Naive thymus-derived CD4-positive, alpha-beta T cell (primary cell): ENCODE measurements at regions of chr13 and their contacts with region 1.

Region 1: DNA sequence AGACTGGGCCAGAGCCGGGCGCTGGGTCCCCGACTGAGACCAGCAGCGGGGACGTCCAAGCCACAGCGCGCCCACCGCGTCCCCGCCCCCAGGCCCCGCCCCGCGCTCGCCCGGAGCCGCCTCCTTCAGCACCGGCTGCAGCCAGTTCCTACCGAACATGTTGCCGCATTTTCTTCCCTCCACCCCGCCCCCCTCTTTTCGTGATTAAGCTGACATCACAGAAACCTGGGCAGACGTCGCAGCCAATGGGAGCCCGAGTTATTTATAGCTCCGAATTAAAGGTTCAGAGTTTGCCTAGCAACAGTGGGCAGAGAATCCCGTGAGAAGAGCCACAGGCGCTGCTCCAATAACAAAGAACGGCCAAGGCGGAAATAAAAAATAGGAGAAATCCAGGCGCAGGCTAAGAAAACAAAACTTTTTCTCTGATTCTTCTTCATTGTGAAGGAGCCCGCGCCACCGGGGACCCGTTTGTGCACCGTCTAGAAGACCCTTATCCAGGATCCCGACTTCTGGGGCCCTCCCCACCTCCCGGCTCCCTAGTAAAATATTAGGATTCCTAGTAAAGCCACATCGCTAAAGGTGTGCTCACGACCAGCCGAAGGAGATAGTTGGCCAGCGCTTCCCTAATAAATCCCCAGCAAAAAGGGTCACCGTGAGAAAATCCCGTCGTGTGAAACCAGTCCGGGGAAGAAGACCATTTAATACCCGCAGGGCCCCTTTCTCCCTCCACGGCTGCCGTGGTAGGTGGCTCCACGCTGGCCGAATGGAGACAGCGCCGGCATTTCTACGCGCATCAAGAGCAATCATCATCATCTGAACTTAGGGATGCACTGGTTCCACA is 61.7 kb downstream of the SERP2 start:
- DNase-seq: peak; percentile 58 to 94 (median 78)
- ATAC-seq: peak; percentile 91
- H3K4me3 ChIP-seq: peak overlapping the region; percentile 65
- H3K4me3 Mint-ChIP-seq: peak overlapping the region; percentile 85 to 94 (median 90)
- H3K27ac ChIP-seq: peak overlapping the region; percentile 75
- H3K27ac Mint-ChIP-seq: peak overlapping the region; percentile 21 to 93 (median 83)
- H3K4me1 ChIP-seq: peaks cover 13 to 14% of the 10 kb centered on the region in 2 donors
- H3K4me1 Mint-ChIP-seq: peaks cover 14 to 34% (median 27%) of the 10 kb centered on the region in 7 donors
- H3K27me3 ChIP-seq: peaks cover 0 to 3% of the 10 kb centered on the region in 2 donors
- H3K27me3 Mint-ChIP-seq: peaks cover 6 to 73% (median 9%) of the 10 kb centered on the region in 5 donors

Region 2: DNA sequence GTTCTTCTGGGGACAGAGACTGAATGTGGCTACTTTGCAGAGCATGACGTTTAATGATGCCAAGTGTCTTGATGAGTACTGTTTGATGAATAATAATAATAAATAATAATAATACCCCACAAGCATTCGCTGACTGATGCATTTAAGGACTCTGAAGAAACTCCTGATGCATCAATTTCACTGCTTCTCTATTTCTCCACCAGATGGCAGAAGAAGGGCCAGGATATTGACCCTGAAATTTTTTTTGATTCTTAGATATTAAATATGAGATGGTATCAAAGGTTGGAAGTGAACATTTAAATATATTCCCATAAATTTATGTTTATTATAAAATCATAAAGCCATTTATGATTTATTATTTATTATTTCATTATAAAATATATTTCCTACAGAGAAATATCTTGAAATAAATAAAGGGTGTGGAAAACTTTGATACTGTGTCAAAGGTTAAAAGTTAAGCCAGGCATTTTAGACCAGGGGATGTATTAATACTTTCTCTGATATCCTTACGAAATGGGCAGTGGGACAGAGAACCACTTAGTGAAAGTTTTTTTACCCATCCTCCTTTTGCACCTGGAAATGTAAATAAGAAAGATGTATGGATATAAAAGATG is 384.8 kb before region 1 on chr13:
- CTCF ChIA-PET with region 1: interaction called, 14 read pairs
- POLR2A ChIA-PET with region 1: no interaction called
- intact Hi-C with region 1: loop called (anchors 1 kb)
- DNase-seq: peak in 5 of 9 donors; percentile 25 to 50 (median 34)
- ATAC-seq: no peak
- H3K4me3 ChIP-seq: no peak overlapping the region
- H3K4me3 Mint-ChIP-seq: no peak overlapping the region
- H3K27ac ChIP-seq: no peak overlapping the region
- H3K27ac Mint-ChIP-seq: no peak overlapping the region
- H3K4me1 ChIP-seq: no peaks in the 10 kb centered on the region
- H3K4me1 Mint-ChIP-seq: peaks cover 0 to 4% (median 2%) of the 10 kb centered on the region in 7 donors
- H3K27me3 ChIP-seq: no peaks in the 10 kb centered on the region
- H3K27me3 Mint-ChIP-seq: peaks cover 32 to 53% (median 44%) of the 10 kb centered on the region in 5 donors

Region 3: DNA sequence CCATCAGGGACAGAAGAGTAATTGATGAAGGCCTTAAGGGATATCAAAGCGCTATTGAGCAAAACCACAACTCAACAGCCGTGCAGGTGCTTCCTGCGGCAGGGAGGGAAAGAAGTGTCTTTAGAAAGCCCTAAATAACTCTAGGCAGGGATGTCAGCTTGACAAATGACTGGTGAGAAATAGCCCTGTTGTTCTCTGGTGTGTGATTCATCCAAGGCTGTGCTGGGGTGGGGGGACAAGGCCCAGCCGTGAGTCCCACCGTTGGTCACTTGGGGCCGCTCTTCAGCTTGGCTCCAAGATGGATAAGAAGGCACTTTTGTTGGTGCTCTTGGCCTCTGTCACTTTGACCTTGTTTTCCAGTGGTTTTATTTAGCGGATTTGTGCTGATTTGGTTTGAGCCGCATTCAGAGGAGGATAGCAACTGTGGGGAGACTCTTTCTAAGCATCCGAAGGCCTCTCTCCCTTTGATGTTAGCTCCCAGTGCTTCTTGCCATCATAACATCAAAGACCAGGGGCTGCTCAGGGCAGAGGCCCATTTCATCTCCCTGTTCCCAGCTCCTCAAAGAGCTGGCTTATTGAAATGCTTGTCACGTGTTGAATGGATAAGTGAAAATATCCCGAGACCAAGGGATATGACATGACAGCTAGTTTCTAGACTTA is 192.0 kb before region 1 on chr13:
- CTCF ChIA-PET with region 1: no interaction called
- POLR2A ChIA-PET with region 1: no interaction called
- intact Hi-C with region 1: loop called (anchors 1 kb)
- DNase-seq: peak in 2 of 9 donors; percentile 9 to 27
- ATAC-seq: peak; percentile 80
- H3K4me3 ChIP-seq: no peak overlapping the region
- H3K4me3 Mint-ChIP-seq: peak overlapping the region in 1 of 10 donors; percentile 2
- H3K27ac ChIP-seq: no peak overlapping the region
- H3K27ac Mint-ChIP-seq: peak overlapping the region in 4 of 9 donors; percentile 3 to 37 (median 20)
- H3K4me1 ChIP-seq: no peaks in the 10 kb centered on the region
- H3K4me1 Mint-ChIP-seq: peaks cover 6 to 12% (median 11%) of the 10 kb centered on the region in 7 donors
- H3K27me3 ChIP-seq: no peaks in the 10 kb centered on the region
- H3K27me3 Mint-ChIP-seq: peaks cover 0 to 6% (median 0%) of the 10 kb centered on the region in 5 donors

Region 4: GRCh38 chr13:44470638-44471562 is 35.5 kb after region 1 on chr13:
- CTCF ChIA-PET with region 1: interaction called, 4 read pairs
- POLR2A ChIA-PET with region 1: no interaction called
- intact Hi-C with region 1: loop called in 1 of 2 experiments (anchors 1 kb)
- DNase-seq: peak in 5 of 9 donors; percentile 10 to 29 (median 21)
- ATAC-seq: no peak
- H3K4me3 ChIP-seq: no peak overlapping the region
- H3K4me3 Mint-ChIP-seq: no peak overlapping the region
- H3K27ac ChIP-seq: no peak overlapping the region
- H3K27ac Mint-ChIP-seq: no peak overlapping the region
- H3K4me1 ChIP-seq: no peaks in the 10 kb centered on the region
- H3K4me1 Mint-ChIP-seq: peaks cover 0 to 5% (median 0%) of the 10 kb centered on the region in 7 donors
- H3K27me3 ChIP-seq: no peaks in the 10 kb centered on the region
- H3K27me3 Mint-ChIP-seq: peaks cover 0 to 23% (median 0%) of the 10 kb centered on the region in 5 donors

Region 5: DNA sequence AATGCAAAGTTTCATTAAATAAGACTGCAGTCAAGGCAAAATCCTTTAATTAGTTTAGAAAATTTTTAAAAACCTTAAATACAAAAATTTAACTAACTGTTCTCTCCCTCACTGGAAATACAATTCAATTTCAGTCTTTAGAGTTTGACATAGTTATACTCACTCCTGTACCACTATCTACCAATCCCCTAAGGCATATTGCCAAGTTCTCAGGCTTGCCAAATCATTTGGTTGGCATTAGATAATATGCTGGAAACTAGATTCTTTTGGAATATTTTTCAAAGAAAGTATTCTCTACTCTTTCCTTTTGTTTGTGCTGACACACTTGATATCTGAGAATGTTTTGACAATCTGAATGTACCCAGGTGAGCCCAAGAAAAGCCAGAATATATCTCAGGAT is 63.6 kb after region 1 on chr13:
- CTCF ChIA-PET with region 1: no interaction called
- POLR2A ChIA-PET with region 1: no interaction called
- intact Hi-C with region 1: no loop called
- DNase-seq: no peak
- ATAC-seq: no peak
- H3K4me3 ChIP-seq: no peak overlapping the region
- H3K4me3 Mint-ChIP-seq: no peak overlapping the region
- H3K27ac ChIP-seq: no peak overlapping the region
- H3K27ac Mint-ChIP-seq: no peak overlapping the region
- H3K4me1 ChIP-seq: no peaks in the 10 kb centered on the region
- H3K4me1 Mint-ChIP-seq: peaks cover 0 to 5% (median 0%) of the 10 kb centered on the region in 7 donors
- H3K27me3 ChIP-seq: no peaks in the 10 kb centered on the region
- H3K27me3 Mint-ChIP-seq: no peaks in the 10 kb centered on the region